ENCODE measurements at regions of chrX and their contacts with region 1.

Region 1: DNA sequence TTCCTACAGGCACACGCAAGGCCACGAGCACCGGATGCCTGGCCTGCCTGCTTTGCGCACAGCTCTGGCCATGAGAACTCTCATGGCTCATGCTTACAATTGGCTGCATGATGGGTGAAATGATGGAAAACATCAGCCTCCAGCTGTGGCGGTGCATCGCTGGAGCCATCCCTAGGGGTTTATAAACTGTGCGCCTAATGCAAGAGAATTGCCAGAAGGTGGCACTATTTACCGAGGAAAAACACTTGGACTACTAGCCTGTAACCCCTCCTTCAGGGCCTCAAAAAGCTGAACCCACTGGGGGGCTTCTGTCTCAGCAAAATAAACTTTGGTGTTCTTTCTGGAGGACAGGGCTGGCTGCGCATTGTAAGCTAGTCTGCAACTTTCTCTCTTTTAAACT is 51.9 kb downstream of the PHKA2 start:
- DNase-seq: peak; percentile 2
- ATAC-seq: peak; percentile 50; the same call in 2 of the 3 replicates
- H3K4me3 ChIP-seq: no peak overlapping the region
- H3K27ac ChIP-seq: no peak overlapping the region
- H3K4me1 ChIP-seq: no peaks in the 10 kb centered on the region
- H3K27me3 ChIP-seq: no peaks in the 10 kb centered on the region
- CTCF ChIP-seq: no peak
- EP300 ChIP-seq: no peak
- POLR2A ChIP-seq: no peak
- RAD21 ChIP-seq: no peak

Region 2: DNA sequence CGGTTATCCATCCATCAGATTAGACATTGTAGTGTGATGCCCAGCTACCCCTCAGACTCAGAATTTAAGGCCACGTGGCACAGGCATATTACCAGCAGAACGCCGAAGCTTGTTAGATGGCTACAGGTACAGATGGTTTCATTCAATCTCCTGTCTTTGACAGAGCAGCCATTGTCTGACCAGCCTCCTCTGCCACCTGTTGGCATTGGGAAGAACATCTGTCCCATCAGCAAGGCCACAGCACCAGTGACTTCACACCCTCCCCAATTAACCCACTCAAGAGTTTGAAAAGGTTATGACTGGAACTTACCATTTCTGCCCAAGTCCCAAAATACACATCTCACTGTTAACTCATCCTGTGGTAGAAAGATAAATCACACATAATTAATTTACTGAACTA is 73.9 kb after region 1 on chrX:
- CTCF ChIA-PET with region 1: no interaction called
- POLR2A ChIA-PET with region 1: no interaction called
- in situ Hi-C with region 1: loop called (anchors 10 kb)
- intact Hi-C with region 1: loop called (anchors 2 kb)
- DNase-seq: peak; percentile 4
- ATAC-seq: peak; percentile 47; the same call in 1 of the 3 replicates
- H3K4me3 ChIP-seq: no peak overlapping the region
- H3K27ac ChIP-seq: no peak overlapping the region
- H3K4me1 ChIP-seq: no peaks in the 10 kb centered on the region
- H3K27me3 ChIP-seq: no peaks in the 10 kb centered on the region
- CTCF ChIP-seq: peak; percentile 42
- EP300 ChIP-seq: no peak
- POLR2A ChIP-seq: no peak
- RAD21 ChIP-seq: no peak

Region 3: GRCh38 chrX:19343535-19344408 is 411.8 kb after region 1 on chrX and contains the start of gene PDHA1:
- CTCF ChIA-PET with region 1: no interaction called
- POLR2A ChIA-PET with region 1: no interaction called
- in situ Hi-C with region 1: loop called (anchors 25 kb)
- intact Hi-C with region 1: no loop called
- DNase-seq: peak; percentile 81
- ATAC-seq: peak; percentile 93
- H3K4me3 ChIP-seq: peak within 1 kb of the TSS; percentile 72 to 87 (median 81)
- H3K27ac ChIP-seq: peak within 1 kb of the TSS; percentile 82
- H3K4me1 ChIP-seq: 0 out of 2 replicates have a peak, but pooled peaks cover 14% of the 10 kb centered on the region
- H3K27me3 ChIP-seq: no peaks in the 10 kb centered on the region; a peak in 1 of 5 replicates
- CTCF ChIP-seq: no peak
- EP300 ChIP-seq: 0 out of 4 replicates have a peak, but pooled peaks of 1 of the 2 experiments have one; percentile 4
- POLR2A ChIP-seq: peak; percentile 79 to 80
- RAD21 ChIP-seq: no peak
- total RNA-seq, gene PDHA1: 249 and 277 TPM in 2 replicates